Endothelial cell of umbilical vein (primary cell): ENCODE measurements at regions of chr4 and their contacts with region 1.

Region 1: GRCh38 chr4:112170451-112170993 is 25.3 kb downstream of the FAM241A start:
- DNase-seq: peak; percentile 74
- H3K4me3 ChIP-seq: no peak overlapping the region
- H3K27ac ChIP-seq: peak overlapping the region; percentile 74
- H3K4me1 ChIP-seq: peaks cover 22% of the 10 kb centered on the region
- H3K27me3 ChIP-seq: no peaks in the 10 kb centered on the region
- CTCF ChIP-seq: no peak
- POLR2A ChIP-seq: no peak

Region 2: GRCh38 chr4:112153211-112153791 is 17.2 kb before region 1 on chr4:
- CTCF ChIA-PET with region 1: interaction called, 5 read pairs
- POLR2A ChIA-PET with region 1: no interaction called
- dilution Hi-C with region 1: no loop called
- intact Hi-C with region 1: loop called (anchors 2 kb)
- DNase-seq: peak; percentile 74
- H3K4me3 ChIP-seq: peak overlapping the region in 2 of 3 experiments; percentile 9 to 12
- H3K27ac ChIP-seq: peak overlapping the region; percentile 1
- H3K4me1 ChIP-seq: peaks cover 23% of the 10 kb centered on the region
- H3K27me3 ChIP-seq: no peaks in the 10 kb centered on the region
- CTCF ChIP-seq: no peak
- POLR2A ChIP-seq: no peak